CD4-positive, alpha-beta memory T cell (primary cell): ENCODE measurements at regions of chr10 and their contacts with region 1.

Region 1: GRCh38 chr10:91908337-91909116 is 759 bp downstream of the FGFBP3 start:
- DNase-seq: peak; percentile 71 to 77 (median 77)
- H3K4me3 ChIP-seq: peak overlapping the region; percentile 68 to 72
- H3K4me3 Mint-ChIP-seq: peak overlapping the region; percentile 89 to 97 (median 93)
- H3K27ac ChIP-seq: peak overlapping the region; percentile 67
- H3K27ac Mint-ChIP-seq: peak overlapping the region; percentile 74 to 94 (median 85)
- H3K4me1 ChIP-seq: peaks cover 25% of the 10 kb centered on the region
- H3K4me1 Mint-ChIP-seq: peaks cover 15 to 26% (median 21%) of the 10 kb centered on the region in 4 donors
- H3K27me3 ChIP-seq: no peaks in the 10 kb centered on the region
- H3K27me3 Mint-ChIP-seq: peaks cover 0 to 4% of the 10 kb centered on the region in 2 donors

Region 2: GRCh38 chr10:90871766-90872647 is 1036.5 kb before region 1 on chr10 and contains the start of gene RPP30:
- CTCF ChIA-PET with region 1: no interaction called
- POLR2A ChIA-PET with region 1: no interaction called
- intact Hi-C with region 1: loop called (anchors 10 kb)
- DNase-seq: peak; percentile 78 to 81 (median 79)
- H3K4me3 ChIP-seq: peak within 1 kb of the TSS; percentile 80 to 91
- H3K4me3 Mint-ChIP-seq: peak within 1 kb of the TSS; percentile 97 to 100 (median 98)
- H3K27ac ChIP-seq: peak within 1 kb of the TSS; percentile 65
- H3K27ac Mint-ChIP-seq: peak within 1 kb of the TSS; percentile 81 to 96 (median 95)
- H3K4me1 ChIP-seq: peaks cover 30% of the 10 kb centered on the region
- H3K4me1 Mint-ChIP-seq: peaks cover 21 to 41% (median 32%) of the 10 kb centered on the region in 4 donors
- H3K27me3 ChIP-seq: no peaks in the 10 kb centered on the region
- H3K27me3 Mint-ChIP-seq: peaks cover 13 to 18% of the 10 kb centered on the region in 2 donors
- total RNA-seq, gene RPP30: 32.3 to 33.2 TPM

Region 3: DNA sequence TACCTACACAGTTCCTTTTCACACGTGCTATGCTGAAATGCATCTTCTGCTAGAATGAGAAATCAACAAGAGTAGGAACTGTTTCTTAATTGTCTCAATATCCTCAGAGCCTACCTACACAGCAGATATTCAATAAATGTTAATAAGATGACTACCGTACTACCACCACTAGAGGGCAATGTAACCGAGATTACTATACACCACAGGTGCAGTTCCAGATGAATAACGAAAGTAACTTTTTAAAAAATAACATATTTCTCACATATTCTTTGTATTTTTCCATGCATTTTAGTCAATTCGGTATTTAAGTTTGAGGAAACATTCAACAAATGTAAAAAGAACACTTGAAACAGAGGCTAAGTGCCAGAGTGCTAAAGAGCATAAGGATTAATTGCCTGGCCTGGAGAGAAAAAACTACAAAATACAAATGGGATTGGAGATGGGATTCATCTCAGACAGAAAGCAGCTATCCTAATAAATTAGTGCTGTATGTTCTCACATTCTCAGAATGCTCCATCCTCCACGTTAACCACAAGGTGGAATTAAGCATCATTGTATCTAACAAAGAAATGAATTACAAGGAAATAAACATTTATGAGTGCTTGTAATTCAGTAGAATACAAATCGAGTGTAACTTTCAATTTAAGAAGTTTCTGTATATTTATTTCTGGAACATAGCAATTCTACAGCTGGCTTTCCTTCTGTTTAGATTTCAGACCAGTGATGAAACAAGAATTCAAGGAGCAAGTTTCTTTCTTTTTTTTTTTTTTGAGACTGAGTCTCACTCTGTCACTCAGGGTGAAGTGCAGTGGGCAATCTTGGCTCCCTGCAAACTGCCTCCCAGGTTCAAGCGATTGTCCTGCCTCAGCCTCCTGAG is 518.7 kb before region 1 on chr10:
- CTCF ChIA-PET with region 1: interaction called, 12 read pairs
- POLR2A ChIA-PET with region 1: interaction called, 3 read pairs
- intact Hi-C with region 1: loop called (anchors 1 kb)
- DNase-seq: peak; percentile 45 to 74 (median 69)
- H3K4me3 ChIP-seq: no peak overlapping the region
- H3K4me3 Mint-ChIP-seq: peak overlapping the region in 3 of 8 donors; percentile 9 to 55 (median 30)
- H3K27ac ChIP-seq: no peak overlapping the region
- H3K27ac Mint-ChIP-seq: no peak overlapping the region
- H3K4me1 ChIP-seq: peaks cover 4% of the 10 kb centered on the region
- H3K4me1 Mint-ChIP-seq: peaks cover 4 to 10% (median 5%) of the 10 kb centered on the region in 4 donors
- H3K27me3 ChIP-seq: no peaks in the 10 kb centered on the region
- H3K27me3 Mint-ChIP-seq: peaks cover 8 to 19% of the 10 kb centered on the region in 2 donors

Region 4: DNA sequence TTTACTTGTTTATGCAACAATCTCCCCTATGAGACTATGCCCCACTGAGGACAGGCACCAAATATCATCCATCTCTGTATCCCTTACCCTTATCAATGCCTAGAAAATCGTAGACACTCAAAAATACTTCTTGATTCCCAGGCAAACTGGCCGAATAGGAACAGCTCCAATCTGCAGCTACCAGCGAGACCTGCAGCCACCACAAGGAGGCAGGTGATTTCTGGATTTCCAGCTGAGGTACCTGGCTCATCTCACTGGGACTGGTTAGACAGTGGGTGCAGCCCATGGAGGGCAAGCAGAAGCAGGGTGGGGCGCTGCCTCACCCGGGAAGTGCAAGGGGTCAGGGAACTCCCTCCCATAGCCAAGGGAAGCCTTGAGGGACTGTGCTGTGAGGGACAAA is 264.8 kb before region 1 on chr10:
- CTCF ChIA-PET with region 1: no interaction called
- POLR2A ChIA-PET with region 1: no interaction called
- intact Hi-C with region 1: loop called (anchors 2 kb)
- DNase-seq: no peak
- H3K4me3 ChIP-seq: no peak overlapping the region
- H3K4me3 Mint-ChIP-seq: no peak overlapping the region
- H3K27ac ChIP-seq: no peak overlapping the region
- H3K27ac Mint-ChIP-seq: no peak overlapping the region
- H3K4me1 ChIP-seq: no peaks in the 10 kb centered on the region
- H3K4me1 Mint-ChIP-seq: no peaks in the 10 kb centered on the region
- H3K27me3 ChIP-seq: no peaks in the 10 kb centered on the region
- H3K27me3 Mint-ChIP-seq: peaks cover 33 to 35% of the 10 kb centered on the region in 2 donors

Region 5: DNA sequence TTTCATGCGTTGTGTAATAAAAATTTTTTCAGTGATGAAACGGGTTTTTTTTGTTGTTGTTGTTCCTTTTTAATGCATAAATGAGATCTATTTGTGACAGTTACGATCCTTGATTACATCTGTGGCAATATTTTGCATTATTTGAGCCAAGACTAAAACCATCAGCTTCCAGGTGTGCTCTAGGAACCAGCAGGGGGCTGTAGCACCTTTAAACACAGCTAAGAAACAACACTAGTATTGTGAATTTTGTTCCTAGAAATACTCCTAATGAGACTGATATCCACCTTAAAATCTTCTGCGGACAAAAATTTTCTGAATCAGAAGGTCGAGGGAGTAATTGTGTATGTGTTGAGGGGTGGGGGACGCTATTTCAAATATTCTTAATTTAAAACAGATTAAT is 51.9 kb before region 1 on chr10:
- CTCF ChIA-PET with region 1: interaction called, 4 read pairs
- POLR2A ChIA-PET with region 1: interaction called, 4 read pairs
- intact Hi-C with region 1: loop called (anchors 1 kb)
- DNase-seq: no peak
- H3K4me3 ChIP-seq: no peak overlapping the region
- H3K4me3 Mint-ChIP-seq: no peak overlapping the region
- H3K27ac ChIP-seq: no peak overlapping the region
- H3K27ac Mint-ChIP-seq: peak overlapping the region in 2 of 7 donors; percentile 51 to 65
- H3K4me1 ChIP-seq: no peaks in the 10 kb centered on the region
- H3K4me1 Mint-ChIP-seq: peaks cover 0 to 3% (median 0%) of the 10 kb centered on the region in 4 donors
- H3K27me3 ChIP-seq: no peaks in the 10 kb centered on the region
- H3K27me3 Mint-ChIP-seq: no peaks in the 10 kb centered on the region

Region 6: GRCh38 chr10:91923371-91924211 is 15.1 kb after region 1 on chr10 and contains the start of gene BTAF1:
- CTCF ChIA-PET with region 1: interaction called, 54 read pairs
- POLR2A ChIA-PET with region 1: interaction called, 65 read pairs
- intact Hi-C with region 1: loop called (anchors 1 kb)
- DNase-seq: peak; percentile 89 to 93 (median 92)
- H3K4me3 ChIP-seq: peak within 1 kb of the TSS; percentile 79 to 87
- H3K4me3 Mint-ChIP-seq: peak within 1 kb of the TSS; percentile 90 to 99 (median 94)
- H3K27ac ChIP-seq: peak within 1 kb of the TSS; percentile 91
- H3K27ac Mint-ChIP-seq: peak within 1 kb of the TSS; percentile 96 to 100 (median 99)
- H3K4me1 ChIP-seq: peaks cover 50% of the 10 kb centered on the region
- H3K4me1 Mint-ChIP-seq: peaks cover 29 to 50% (median 38%) of the 10 kb centered on the region in 4 donors
- H3K27me3 ChIP-seq: no peaks in the 10 kb centered on the region
- H3K27me3 Mint-ChIP-seq: peaks cover 2% of the 10 kb centered on the region in 2 donors
- total RNA-seq, gene BTAF1: 69.1 to 76.9 TPM